Heart left ventricle (tissue), 16 donors: ENCODE measurements at regions of chr10 and their contacts with region 1.

Region 1: GRCh38 chr10:108911814-108912541 is 1011.3 kb downstream of the XPNPEP1 start:
- DNase-seq: peak; percentile 27 to 65 (median 40)
- ATAC-seq: peak; percentile 55 to 85 (median 76)
- H3K4me3 ChIP-seq: peak overlapping the region in 11 of 12 donors; percentile 22 to 52 (median 43)
- H3K27ac ChIP-seq: no peak overlapping the region
- H3K4me1 ChIP-seq: peaks cover 0 to 9% (median 0%) of the 10 kb centered on the region in 12 donors
- H3K27me3 ChIP-seq: peaks cover 0 to 56% (median 8%) of the 10 kb centered on the region in 9 donors
- CTCF ChIP-seq: peak in 9 of 12 donors; percentile 8 to 50 (median 23)
- POLR2A ChIP-seq: no peak

Region 2: GRCh38 chr10:108260383-108260906 is 651.5 kb before region 1 on chr10:
- intact Hi-C with region 1: no loop called
- DNase-seq: no peak
- ATAC-seq: no peak
- H3K4me3 ChIP-seq: no peak overlapping the region
- H3K27ac ChIP-seq: no peak overlapping the region
- H3K4me1 ChIP-seq: no peaks in the 10 kb centered on the region
- H3K27me3 ChIP-seq: no peaks in the 10 kb centered on the region
- CTCF ChIP-seq: no peak
- POLR2A ChIP-seq: no peak

Region 3: DNA sequence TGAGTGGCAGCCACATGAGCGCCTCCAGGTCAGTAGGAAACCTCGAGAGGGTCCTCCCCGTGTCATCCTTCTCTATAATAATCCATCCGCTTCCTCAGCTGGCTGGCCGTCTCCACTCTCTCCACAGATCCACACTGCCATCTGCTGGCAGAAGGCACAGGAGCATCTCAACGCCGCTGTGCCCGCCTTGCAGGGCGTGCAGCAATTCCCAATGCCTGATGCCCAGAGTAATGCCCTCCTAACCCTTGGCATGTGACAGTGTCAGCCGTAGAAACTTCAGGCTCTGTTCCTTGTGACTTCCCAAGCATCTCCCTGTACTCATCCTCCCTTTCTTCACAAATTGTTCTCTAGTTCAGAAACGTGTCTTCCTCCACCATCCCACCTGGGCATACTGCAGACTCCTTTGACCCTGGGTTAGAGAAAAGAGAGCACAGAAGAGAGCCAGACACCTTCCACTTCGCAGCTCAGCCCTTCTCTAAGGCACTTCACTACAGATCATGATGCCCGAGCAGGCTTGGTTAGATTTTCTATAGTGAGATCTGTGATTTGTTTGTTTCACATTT is 940.6 kb after region 1 on chr10:
- intact Hi-C with region 1: loop called in 1 of 10 experiments (anchors 5 kb)
- DNase-seq: peak; percentile 71 to 85 (median 74)
- ATAC-seq: peak; percentile 71 to 90 (median 82)
- H3K4me3 ChIP-seq: no peak overlapping the region
- H3K27ac ChIP-seq: no peak overlapping the region
- H3K4me1 ChIP-seq: peaks cover 0 to 18% (median 6%) of the 10 kb centered on the region in 12 donors
- H3K27me3 ChIP-seq: no peaks in the 10 kb centered on the region
- CTCF ChIP-seq: peak; percentile 80 to 96 (median 92)
- POLR2A ChIP-seq: no peak